Activated T-helper 1 cell treated with anti-CD3 and anti-CD28 coated beads, Interleukin-12 subunit alpha, Interleukin-12 subunit beta, Interleukin-2, Interleukin-4 antibody, amounts not matched to agents 30 ng/mL and 10 ng/mL and 1 ng/mL, durations not matched to agents 14 hours and 24 hours and 36 hours (primary cell): ENCODE measurements at regions of chr9 and their contacts with region 1.

Region 1: DNA sequence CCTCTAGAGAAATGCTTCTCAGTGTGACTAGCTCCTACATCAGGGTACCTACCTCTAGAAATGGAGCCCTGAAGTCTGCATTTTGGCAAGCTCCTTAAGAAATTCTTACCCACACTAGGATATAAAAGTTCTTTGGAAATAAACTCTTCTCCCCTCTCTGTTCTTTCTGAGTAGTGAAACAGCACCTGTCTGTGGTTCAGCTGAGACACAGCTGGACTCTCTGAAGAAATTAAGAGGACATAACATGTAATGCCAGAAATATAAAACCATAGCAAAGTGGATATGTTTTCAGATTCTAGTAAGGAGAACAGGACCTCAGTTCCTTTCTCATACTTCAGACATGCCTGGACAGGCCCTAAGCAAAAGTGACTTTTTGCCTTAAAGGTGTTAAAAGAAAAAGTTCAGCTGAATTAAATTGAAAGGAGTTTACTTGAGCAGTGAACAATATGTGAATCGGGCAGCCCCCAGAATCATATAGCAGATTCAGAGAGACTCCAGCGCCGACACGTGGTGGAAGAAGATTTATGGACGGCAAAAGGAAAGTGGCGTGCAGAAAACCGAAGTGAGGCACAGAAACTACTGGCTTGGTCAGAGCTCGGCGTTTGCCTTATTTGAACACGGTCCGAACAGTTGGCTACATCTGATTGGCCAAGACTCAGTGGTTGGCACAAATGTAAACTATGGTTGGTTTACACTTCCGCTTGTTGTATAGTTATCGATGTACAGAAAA is 64.5 kb downstream of the PRKACG start:
- DNase-seq: no peak
- H3K4me3 Mint-ChIP-seq: peak overlapping the region; percentile 62
- H3K27ac Mint-ChIP-seq: peak overlapping the region; percentile 69
- H3K4me1 Mint-ChIP-seq: peaks cover 76% of the 10 kb centered on the region
- H3K27me3 Mint-ChIP-seq: no peaks in the 10 kb centered on the region

Region 2: DNA sequence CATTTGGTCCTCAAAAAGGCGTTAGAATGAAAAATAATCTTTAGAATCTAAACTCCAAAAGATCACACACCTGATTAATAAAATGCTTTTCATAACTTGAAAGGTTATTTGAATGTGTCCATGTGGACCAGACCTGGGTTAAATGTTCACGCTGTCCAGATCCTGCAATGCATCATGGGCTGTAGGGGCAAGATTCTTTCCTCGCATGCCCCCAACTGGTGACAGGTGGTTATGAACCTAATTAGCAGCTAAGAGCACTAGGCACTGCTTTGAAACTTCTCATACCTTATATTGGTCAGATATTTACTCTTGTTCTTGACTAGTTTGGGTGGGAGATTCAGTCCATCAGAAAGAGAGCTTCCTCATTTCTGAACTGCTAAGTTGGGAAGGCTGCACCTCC is 263.7 kb before region 1 on chr9:
- intact Hi-C with region 1: loop called (anchors 1 kb)
- DNase-seq: no peak
- H3K4me3 Mint-ChIP-seq: no peak overlapping the region
- H3K27ac Mint-ChIP-seq: no peak overlapping the region
- H3K4me1 Mint-ChIP-seq: peaks cover 11% of the 10 kb centered on the region
- H3K27me3 Mint-ChIP-seq: no peaks in the 10 kb centered on the region

Region 3: DNA sequence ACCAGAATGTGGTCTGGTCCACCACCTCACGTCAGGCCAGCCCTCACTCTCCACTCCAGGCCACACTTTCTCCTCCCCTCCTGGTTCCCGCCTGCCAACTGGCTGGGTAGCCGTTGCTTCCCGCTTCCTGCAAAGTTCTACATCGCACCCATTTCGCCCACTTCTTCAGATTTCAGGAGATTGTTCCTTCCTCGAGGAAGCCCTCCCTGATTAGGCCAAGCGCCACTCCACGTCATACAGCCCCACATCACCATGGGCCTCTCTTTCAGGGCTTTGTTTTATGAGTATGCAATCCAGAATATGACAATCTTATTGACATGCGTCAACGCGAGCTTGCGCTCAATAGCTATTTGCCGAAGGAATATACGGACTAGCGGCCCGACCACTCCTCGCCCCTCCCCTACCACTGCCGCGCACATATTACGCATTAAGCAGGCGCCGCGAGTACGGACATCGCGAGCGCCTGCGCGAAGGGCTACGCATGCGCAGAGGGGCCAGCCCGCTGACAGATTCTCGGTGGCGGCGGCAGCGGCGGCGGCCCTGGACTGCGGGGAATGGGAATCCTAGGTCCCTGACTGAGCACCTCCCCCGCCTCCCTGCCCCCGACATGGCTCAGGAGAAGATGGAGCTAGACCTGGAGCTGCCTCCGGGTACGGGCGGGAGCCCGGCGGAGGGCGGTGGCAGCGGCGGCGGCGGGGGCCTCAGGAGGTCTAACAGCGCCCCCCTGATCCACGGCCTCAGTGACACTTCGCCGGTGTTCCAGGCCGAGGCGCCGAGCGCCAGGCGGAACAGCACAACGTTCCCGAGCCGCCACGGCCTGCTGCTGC is 169.7 kb before region 1 on chr9:
- intact Hi-C with region 1: loop called (anchors 2 kb)
- DNase-seq: peak; percentile 89
- H3K4me3 Mint-ChIP-seq: no peak overlapping the region
- H3K27ac Mint-ChIP-seq: no peak overlapping the region
- H3K4me1 Mint-ChIP-seq: peaks cover 4% of the 10 kb centered on the region
- H3K27me3 Mint-ChIP-seq: no peaks in the 10 kb centered on the region

Region 4: DNA sequence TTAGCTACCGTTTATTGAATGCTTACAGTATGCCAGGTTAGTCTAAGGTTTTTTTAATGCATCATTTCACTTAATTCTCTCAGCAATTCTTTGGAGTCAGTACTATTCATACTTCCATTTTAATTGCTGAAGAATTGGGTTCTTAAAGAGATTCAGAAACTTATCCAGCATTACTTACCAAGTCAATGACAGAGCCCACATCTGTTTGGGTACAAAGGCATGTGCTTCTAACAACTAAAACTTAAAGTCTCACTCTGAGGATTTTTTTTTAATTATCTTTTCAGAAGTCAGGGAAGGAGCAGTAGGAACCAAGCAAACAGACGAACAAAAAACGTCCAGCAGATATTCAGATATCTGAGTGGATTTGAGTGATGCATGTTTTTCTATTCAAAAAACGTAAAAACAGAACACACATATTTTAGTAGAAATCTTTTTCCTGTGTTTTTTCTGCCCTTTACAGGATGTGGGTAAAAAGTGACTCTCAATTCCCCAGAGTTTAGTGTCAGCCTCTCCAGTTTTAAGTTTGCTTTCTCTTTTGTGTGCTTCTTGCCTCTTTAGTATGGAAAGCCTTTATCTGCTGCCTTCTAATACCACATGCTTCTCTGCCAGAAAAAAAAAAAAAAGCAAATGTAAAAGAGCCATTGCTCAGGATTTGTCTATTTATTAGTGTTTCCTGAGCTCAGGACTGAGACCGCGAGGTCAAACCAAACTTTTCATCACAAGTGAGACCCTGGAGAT is 53.5 kb before region 1 on chr9:
- intact Hi-C with region 1: loop called (anchors 1 kb)
- DNase-seq: no peak
- H3K4me3 Mint-ChIP-seq: peak overlapping the region; percentile 70
- H3K27ac Mint-ChIP-seq: peak overlapping the region; percentile 84
- H3K4me1 Mint-ChIP-seq: peaks cover 51% of the 10 kb centered on the region
- H3K27me3 Mint-ChIP-seq: no peaks in the 10 kb centered on the region

Region 5: GRCh38 chr9:68933434-68934328 is 15.8 kb before region 1 on chr9:
- intact Hi-C with region 1: loop called (anchors 1 kb)
- DNase-seq: no peak
- H3K4me3 Mint-ChIP-seq: no peak overlapping the region
- H3K27ac Mint-ChIP-seq: no peak overlapping the region
- H3K4me1 Mint-ChIP-seq: peaks cover 26% of the 10 kb centered on the region
- H3K27me3 Mint-ChIP-seq: peaks cover 33% of the 10 kb centered on the region

Region 6: DNA sequence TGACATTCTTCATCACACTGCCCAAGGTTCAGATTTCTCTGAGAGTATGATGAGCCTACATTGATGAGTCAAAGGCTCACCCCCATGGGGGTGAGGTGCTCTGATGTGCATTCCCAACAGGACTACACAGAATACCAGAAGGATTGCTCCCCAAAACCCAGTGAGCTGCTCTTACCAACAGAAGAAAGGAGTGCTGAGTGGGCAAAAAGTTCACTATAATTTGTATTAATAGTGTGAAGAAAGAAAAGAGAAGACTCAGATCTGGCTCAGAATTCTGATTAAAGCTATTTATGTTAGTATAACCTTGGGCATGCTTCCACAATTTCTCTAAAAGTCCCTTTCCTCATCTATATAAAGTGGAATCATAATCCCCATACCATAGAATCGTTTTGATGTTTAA is 18.4 kb after region 1 on chr9:
- intact Hi-C with region 1: no loop called
- DNase-seq: no peak
- H3K4me3 Mint-ChIP-seq: no peak overlapping the region
- H3K27ac Mint-ChIP-seq: no peak overlapping the region
- H3K4me1 Mint-ChIP-seq: peaks cover 29% of the 10 kb centered on the region
- H3K27me3 Mint-ChIP-seq: no peaks in the 10 kb centered on the region

Region 7: DNA sequence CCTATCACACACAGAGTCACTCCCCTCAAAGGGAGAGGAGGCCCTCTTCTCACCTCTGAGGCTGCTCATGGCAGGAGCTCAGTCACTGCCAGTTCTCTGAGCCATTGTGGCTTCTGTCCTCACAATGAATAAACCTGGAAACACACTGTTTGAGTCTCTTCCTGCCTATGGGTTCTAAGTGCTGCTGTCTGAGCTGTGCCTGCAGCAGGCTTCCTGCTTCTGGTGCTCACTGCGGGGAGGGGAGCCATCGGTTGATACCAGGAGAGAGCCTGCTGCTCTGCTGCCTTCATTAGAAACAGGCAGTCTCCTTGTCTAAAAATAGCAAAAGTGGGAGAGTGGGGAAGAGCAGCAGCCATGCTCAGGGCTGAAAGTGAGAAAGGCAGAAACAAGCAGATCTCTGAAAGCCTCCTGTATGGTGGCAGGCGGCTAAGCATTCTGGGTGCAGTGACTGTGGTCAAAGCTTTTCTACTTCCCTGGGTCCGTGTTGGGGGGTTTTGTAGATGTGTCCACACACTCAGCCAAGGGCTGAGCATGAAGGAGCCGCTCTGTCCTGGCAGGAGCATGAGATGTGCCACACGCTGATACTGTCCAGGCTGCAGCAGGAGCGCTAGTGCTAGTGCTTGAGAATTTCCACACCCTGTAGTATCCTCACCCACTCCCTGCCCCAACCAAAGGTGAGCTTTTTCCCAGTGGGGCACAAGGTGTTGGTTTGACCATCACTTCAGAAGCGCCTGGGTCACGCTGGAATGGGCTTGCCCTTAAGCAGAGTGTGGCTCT is 30.3 kb after region 1 on chr9:
- intact Hi-C with region 1: loop called (anchors 1 kb)
- DNase-seq: peak; percentile 38
- H3K4me3 Mint-ChIP-seq: peak overlapping the region; percentile 69
- H3K27ac Mint-ChIP-seq: peak overlapping the region; percentile 97
- H3K4me1 Mint-ChIP-seq: peaks cover 85% of the 10 kb centered on the region
- H3K27me3 Mint-ChIP-seq: peaks cover 2% of the 10 kb centered on the region

Region 8: GRCh38 chr9:69027355-69028096 is 78.1 kb after region 1 on chr9:
- intact Hi-C with region 1: loop called (anchors 5 kb)
- DNase-seq: peak; percentile 32
- H3K4me3 Mint-ChIP-seq: no peak overlapping the region
- H3K27ac Mint-ChIP-seq: peak overlapping the region; percentile 18
- H3K4me1 Mint-ChIP-seq: peaks cover 51% of the 10 kb centered on the region
- H3K27me3 Mint-ChIP-seq: peaks cover 1% of the 10 kb centered on the region

Region 9: GRCh38 chr9:69532396-69532795 is 583.0 kb after region 1 on chr9:
- intact Hi-C with region 1: no loop called
- DNase-seq: no peak
- H3K4me3 Mint-ChIP-seq: no peak overlapping the region
- H3K27ac Mint-ChIP-seq: no peak overlapping the region
- H3K4me1 Mint-ChIP-seq: no peaks in the 10 kb centered on the region
- H3K27me3 Mint-ChIP-seq: peaks cover 6% of the 10 kb centered on the region

Region 10: GRCh38 chr9:69798744-69799143 is 849.3 kb after region 1 on chr9:
- intact Hi-C with region 1: no loop called
- DNase-seq: no peak
- H3K4me3 Mint-ChIP-seq: no peak overlapping the region
- H3K27ac Mint-ChIP-seq: no peak overlapping the region
- H3K4me1 Mint-ChIP-seq: no peaks in the 10 kb centered on the region
- H3K27me3 Mint-ChIP-seq: peaks cover 17% of the 10 kb centered on the region